MCF 10A (cell line): ENCODE measurements at regions of chr3 and their contacts with region 1.

Region 1: DNA sequence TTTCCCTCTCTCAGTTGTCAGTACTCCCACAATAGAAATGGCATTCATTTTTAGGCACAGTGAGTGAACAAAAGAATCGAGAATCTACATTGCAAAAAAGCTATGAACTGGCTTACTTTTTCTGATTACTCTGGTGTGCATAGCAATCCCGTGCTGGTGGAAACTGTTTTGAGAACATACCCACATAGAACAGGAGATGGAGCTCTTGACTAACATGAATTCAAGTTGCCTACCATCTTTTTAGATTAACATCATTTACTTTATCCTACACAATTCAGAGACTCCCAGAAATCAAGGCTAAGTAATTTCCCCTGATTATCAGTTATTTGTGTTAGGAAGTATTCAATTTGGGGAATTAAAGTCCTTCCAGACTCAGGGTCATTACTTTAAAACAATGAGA is 326.6 kb downstream of the ARPP21 start:
- DNase-seq: peak; percentile 42
- H3K4me3 Mint-ChIP-seq: no peak overlapping the region
- H3K27ac Mint-ChIP-seq: no peak overlapping the region
- H3K4me1 Mint-ChIP-seq: no peaks in the 10 kb centered on the region
- H3K27me3 Mint-ChIP-seq: peaks cover 45% of the 10 kb centered on the region
- CTCF ChIP-seq: peak; percentile 50

Region 2: DNA sequence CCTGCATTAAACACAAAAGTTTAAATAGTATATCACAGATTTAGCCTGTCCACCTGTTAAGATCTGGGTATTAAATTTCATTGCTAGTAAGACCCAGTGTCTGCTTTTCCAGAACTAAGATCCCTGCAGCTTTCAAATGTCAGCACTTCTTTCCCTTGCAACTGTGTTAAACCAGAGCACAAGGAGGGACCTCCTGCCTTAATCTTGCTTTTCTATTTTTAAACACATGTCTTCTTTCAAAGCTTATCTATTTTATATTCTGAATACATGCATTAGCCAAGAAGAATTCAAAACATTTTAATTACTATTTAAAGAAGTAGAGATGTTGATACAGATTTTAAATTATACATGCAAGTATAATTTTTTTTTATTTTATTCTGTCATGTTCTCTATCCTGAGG is 11.5 kb before region 1 on chr3:
- CTCF ChIA-PET with region 1: interaction called, 13 read pairs
- POLR2A ChIA-PET with region 1: no interaction called
- intact Hi-C with region 1: no loop called
- DNase-seq: no peak
- H3K4me3 Mint-ChIP-seq: no peak overlapping the region
- H3K27ac Mint-ChIP-seq: no peak overlapping the region
- H3K4me1 Mint-ChIP-seq: no peaks in the 10 kb centered on the region
- H3K27me3 Mint-ChIP-seq: peaks cover 57% of the 10 kb centered on the region
- CTCF ChIP-seq: no peak

Region 3: GRCh38 chr3:36707623-36708409 is 741.9 kb after region 1 on chr3:
- CTCF ChIA-PET with region 1: interaction called, 13 read pairs
- POLR2A ChIA-PET with region 1: no interaction called
- intact Hi-C with region 1: no loop called
- DNase-seq: peak; percentile 76
- H3K4me3 Mint-ChIP-seq: no peak overlapping the region
- H3K27ac Mint-ChIP-seq: no peak overlapping the region
- H3K4me1 Mint-ChIP-seq: peaks cover 6% of the 10 kb centered on the region
- H3K27me3 Mint-ChIP-seq: no peaks in the 10 kb centered on the region
- CTCF ChIP-seq: peak; percentile 30